Pancreas (tissue), 10 donors: ENCODE measurements at regions of chr11 and their contacts with region 1.

Region 1: DNA sequence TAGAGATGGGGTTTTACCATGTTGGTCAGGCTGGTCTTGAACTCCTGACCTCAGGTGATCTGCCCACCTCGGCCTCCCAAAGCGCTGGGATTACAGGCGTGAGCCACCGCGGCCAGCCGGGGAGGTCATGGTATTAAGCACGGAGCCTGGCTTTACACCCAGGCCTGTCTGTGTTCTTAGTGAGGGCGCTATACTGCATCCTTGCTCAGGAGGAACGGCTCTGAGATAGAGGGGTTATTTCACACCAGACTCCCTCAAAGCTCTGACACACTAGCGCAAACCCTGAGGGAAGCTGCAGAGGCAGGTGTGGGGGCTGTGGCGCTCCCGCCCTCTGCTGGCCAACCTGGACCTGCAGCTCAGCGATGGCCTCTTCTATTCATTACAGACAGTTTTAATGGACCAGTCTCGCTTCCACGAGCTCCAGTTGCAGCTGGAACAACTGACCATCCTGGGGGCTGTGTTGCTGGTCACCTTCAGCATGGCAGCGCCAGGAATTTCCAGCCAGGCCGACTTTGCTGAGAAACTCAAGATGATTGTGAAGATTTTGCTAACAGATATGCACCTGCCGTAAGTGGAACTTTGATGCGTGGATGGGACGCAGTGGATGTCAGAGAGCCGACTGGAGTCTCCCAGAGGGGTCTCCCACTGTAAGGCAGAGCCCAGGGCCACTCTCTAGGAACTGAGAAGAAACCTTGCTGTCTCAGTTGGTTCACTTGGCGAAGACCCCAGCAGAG is 26.2 kb downstream of the TCP11L1 start:
- DNase-seq: peak; percentile 36 to 83 (median 62)
- ATAC-seq: peak; percentile 85 to 95 (median 92)
- H3K4me3 ChIP-seq: no peak overlapping the region
- H3K27ac ChIP-seq: no peak overlapping the region
- H3K4me1 ChIP-seq: no peaks in the 10 kb centered on the region
- H3K27me3 ChIP-seq: no peaks in the 10 kb centered on the region
- CTCF ChIP-seq: peak; percentile 74 to 87 (median 82)

Region 2: DNA sequence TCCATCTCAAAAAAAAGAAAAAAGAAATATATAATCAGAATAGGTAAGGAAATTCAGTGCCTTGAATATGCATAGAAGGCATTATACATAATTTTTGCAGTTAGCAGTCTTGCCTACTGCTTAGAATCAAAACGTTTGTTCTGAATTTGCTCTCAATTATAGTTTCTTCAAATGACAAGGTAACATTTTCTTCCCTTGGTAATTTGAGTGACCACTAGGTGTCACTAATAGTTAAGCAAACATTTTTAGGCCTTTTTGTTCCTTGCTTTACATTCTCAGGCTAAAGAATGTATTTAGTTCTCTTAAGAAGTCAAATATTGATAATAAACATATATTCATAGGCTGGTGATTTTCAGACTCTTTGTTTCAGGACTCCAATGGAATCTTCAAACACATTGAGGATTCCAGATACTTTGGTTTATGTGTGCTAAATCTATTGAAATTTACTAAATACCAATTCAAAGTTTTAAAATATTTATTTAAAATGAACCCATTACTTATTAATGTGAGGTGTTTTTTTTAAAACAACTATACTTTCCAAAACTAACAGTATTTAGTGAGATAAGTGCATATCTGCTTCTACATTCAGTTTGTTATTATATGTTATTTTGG is 105.0 kb before region 1 on chr11:
- intact Hi-C with region 1: loop called in 2 of 3 experiments (anchors 5 kb)
- DNase-seq: no peak
- ATAC-seq: peak in 3 of 4 donors; percentile 55 to 75 (median 63)
- H3K4me3 ChIP-seq: no peak overlapping the region
- H3K27ac ChIP-seq: no peak overlapping the region
- H3K4me1 ChIP-seq: peaks cover 0 to 4% (median 0%) of the 10 kb centered on the region in 3 donors
- H3K27me3 ChIP-seq: no peaks in the 10 kb centered on the region
- CTCF ChIP-seq: peak; percentile 28 to 59 (median 42)